ENCODE measurements at regions of chr6 and their contacts with region 1.

Region 1: GRCh38 chr6:1787894-1788293 is 178.2 kb downstream of the FOXC1 start:
- DNase-seq: peak; percentile 76 to 81
- H3K4me3 ChIP-seq: no peak overlapping the region
- H3K27ac ChIP-seq: peak overlapping the region; percentile 27 to 35
- H3K4me1 ChIP-seq: peaks cover 0 to 25% (median 13%) of the 10 kb centered on the region in 4 donors
- H3K27me3 ChIP-seq: no peaks in the 10 kb centered on the region
- CTCF ChIP-seq: no peak

Region 2: GRCh38 chr6:1701668-1702353 is 86.1 kb before region 1 on chr6:
- intact Hi-C with region 1: loop called (anchors 10 kb)
- DNase-seq: peak; percentile 68 to 85
- H3K4me3 ChIP-seq: peak overlapping the region; percentile 5 to 31
- H3K27ac ChIP-seq: peak overlapping the region; percentile 75 to 83
- H3K4me1 ChIP-seq: peaks cover 0 to 65% (median 41%) of the 10 kb centered on the region in 4 donors
- H3K27me3 ChIP-seq: no peaks in the 10 kb centered on the region
- CTCF ChIP-seq: no peak